Left ventricle myocardium superior (tissue), 1 donor: ENCODE measurements at regions of chr7 and their contacts with region 1.

Region 1: DNA sequence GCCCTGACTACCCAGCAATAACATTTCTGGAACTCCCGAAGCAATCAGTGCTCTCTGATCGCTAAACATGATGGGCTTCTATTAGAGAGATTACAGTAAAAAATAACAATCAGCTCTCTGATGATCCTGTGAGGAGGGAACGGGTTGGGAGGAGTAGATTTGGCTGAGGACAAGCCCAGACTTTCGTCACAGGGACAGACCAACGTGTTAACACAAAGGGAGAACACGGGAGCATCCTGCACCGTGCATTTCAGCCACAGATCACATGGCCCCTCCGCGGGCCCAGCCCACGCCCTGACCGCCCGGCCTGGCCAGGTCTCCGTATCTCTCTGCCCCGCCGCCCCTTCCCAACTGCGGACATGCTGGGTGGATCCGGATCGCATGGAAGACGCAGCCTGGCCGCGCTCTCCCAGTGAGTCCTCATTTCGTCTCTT is 95.0 kb upstream of the AGBL3 start:
- DNase-seq: peak; percentile 87
- ATAC-seq: peak; percentile 85

Region 2: GRCh38 chr7:134044682-134045081 is 846.6 kb before region 1 on chr7:
- intact Hi-C with region 1: no loop called
- DNase-seq: no peak
- ATAC-seq: no peak

Region 3: DNA sequence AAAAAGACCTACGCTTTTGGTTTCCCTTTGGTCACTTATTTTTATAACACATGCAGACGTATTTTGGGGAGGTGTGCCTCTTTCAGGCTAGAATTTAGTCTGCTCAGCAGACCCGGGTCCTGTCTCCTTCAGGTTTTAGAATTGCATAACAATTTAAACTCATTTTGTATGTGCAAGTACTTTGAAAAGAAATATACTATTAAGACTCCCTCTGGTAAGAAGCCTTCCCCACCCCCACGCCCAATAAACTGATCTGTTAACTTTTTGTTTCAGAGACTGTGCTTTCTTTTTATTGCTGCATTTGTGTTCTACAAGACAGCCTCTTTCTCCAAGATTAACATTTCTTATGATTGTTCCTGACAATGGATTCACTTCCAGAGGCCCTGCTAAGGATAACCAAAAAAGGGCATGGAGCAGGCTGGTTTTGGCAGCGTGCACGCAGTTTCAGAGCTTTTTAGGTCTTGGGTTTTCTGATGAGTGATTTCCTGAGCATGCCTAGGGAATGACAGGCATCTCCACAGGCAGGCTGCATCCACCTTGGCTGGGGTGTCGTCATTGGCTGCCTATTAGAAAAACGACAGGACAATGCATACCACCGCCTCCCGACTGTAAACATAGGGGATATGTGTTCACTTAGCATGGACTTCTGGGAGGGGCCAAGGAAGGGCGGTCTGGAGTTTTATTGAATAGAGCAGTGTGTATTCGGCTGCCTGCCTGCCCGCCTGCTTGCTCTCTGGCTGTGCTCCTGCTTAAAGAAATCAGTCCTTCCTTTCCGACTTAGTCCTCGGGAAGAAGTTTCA is 112.1 kb before region 1 on chr7 and contains the start of gene CALD1:
- intact Hi-C with region 1: loop called (anchors 10 kb)
- DNase-seq: peak; percentile 74
- ATAC-seq: peak; percentile 94
- total RNA-seq, gene CALD1: 118 TPM